Heart left ventricle (tissue), 16 donors: ENCODE measurements at regions of chr7 and their contacts with region 1.

Region 1: GRCh38 chr7:135645296-135645904 is 16.9 kb upstream of the STMP1 start:
- DNase-seq: no peak
- ATAC-seq: peak in 3 of 4 donors; percentile 51 to 70 (median 62)
- H3K4me3 ChIP-seq: no peak overlapping the region
- H3K27ac ChIP-seq: no peak overlapping the region
- H3K4me1 ChIP-seq: peaks cover 0 to 2% (median 0%) of the 10 kb centered on the region in 12 donors
- H3K27me3 ChIP-seq: no peaks in the 10 kb centered on the region
- CTCF ChIP-seq: peak; percentile 56 to 79 (median 70)
- POLR2A ChIP-seq: no peak

Region 2: GRCh38 chr7:134470864-134471263 is 1174.5 kb before region 1 on chr7:
- intact Hi-C with region 1: no loop called
- DNase-seq: no peak
- ATAC-seq: no peak
- H3K4me3 ChIP-seq: no peak overlapping the region
- H3K27ac ChIP-seq: no peak overlapping the region
- H3K4me1 ChIP-seq: peaks cover 0 to 9% (median 5%) of the 10 kb centered on the region in 12 donors
- H3K27me3 ChIP-seq: no peaks in the 10 kb centered on the region
- CTCF ChIP-seq: no peak
- POLR2A ChIP-seq: no peak

Region 3: GRCh38 chr7:135074085-135074484 is 571.3 kb before region 1 on chr7:
- intact Hi-C with region 1: no loop called
- DNase-seq: no peak
- ATAC-seq: no peak
- H3K4me3 ChIP-seq: no peak overlapping the region
- H3K27ac ChIP-seq: no peak overlapping the region
- H3K4me1 ChIP-seq: no peaks in the 10 kb centered on the region
- H3K27me3 ChIP-seq: no peaks in the 10 kb centered on the region
- CTCF ChIP-seq: no peak
- POLR2A ChIP-seq: no peak

Region 4: GRCh38 chr7:135274495-135275268 is 370.7 kb before region 1 on chr7:
- intact Hi-C with region 1: loop called in 5 of 10 experiments (anchors 2 to 5 kb)
- DNase-seq: peak in 3 of 5 donors; percentile 45 to 52 (median 51)
- ATAC-seq: peak; percentile 22 to 75 (median 69)
- H3K4me3 ChIP-seq: no peak overlapping the region
- H3K27ac ChIP-seq: no peak overlapping the region
- H3K4me1 ChIP-seq: peaks cover 0 to 4% (median 0%) of the 10 kb centered on the region in 12 donors
- H3K27me3 ChIP-seq: peaks cover 0 to 8% (median 0%) of the 10 kb centered on the region in 9 donors
- CTCF ChIP-seq: peak; percentile 81 to 94 (median 86)
- POLR2A ChIP-seq: no peak

Region 5: DNA sequence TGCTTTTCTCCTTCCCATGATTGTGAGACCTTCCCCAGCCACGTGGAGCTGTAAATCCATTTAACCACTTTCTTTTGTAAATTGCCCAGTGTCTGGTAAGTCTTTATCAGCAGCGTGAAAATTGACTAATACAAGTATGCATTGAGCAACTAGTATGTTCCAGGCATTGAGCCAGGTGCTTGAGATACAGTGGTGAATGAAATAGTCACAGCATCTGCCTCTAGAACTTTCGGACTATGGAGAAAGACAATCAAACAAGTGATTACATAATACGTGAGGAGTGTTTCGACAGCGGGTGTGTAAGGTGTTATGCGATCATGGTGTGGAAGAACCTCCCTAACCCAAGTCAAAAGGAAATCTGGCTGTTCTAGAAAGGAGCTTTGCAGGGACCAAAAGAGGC is 109.2 kb before region 1 on chr7:
- intact Hi-C with region 1: no loop called
- DNase-seq: no peak
- ATAC-seq: no peak
- H3K4me3 ChIP-seq: no peak overlapping the region
- H3K27ac ChIP-seq: no peak overlapping the region
- H3K4me1 ChIP-seq: peaks cover 0 to 12% (median 0%) of the 10 kb centered on the region in 12 donors
- H3K27me3 ChIP-seq: no peaks in the 10 kb centered on the region
- CTCF ChIP-seq: no peak
- POLR2A ChIP-seq: no peak